ENCODE measurements at regions of chr5 and their contacts with region 1.

Region 1: GRCh38 chr5:40078896-40079575 is 600.7 kb upstream of the PTGER4 start:
- DNase-seq: peak; percentile 40
- H3K4me3 ChIP-seq: no peak overlapping the region
- H3K27ac ChIP-seq: peak overlapping the region; percentile 77
- H3K4me1 ChIP-seq: peaks cover 29% of the 10 kb centered on the region
- H3K27me3 ChIP-seq: no peaks in the 10 kb centered on the region
- CTCF ChIP-seq: no peak

Region 2: DNA sequence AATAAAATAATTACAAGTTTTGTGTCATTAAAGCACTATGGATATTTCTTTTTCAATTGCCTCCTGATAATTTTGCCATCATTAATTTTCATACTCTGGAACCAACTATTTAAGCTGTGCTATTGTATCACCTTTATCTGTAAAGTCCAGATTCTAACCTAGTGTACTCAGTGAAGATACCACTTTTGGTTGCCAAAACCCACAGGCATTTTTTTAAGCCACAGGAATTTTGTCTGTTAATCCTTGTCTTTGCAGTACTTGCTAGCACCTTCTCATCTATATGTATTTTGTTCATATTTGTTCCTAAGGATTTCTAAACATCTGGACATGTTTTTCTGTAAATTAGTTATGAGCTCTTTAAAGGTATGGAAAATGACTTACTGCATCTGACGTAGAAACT is 172.9 kb before region 1 on chr5:
- CTCF ChIA-PET with region 1: no interaction called
- POLR2A ChIA-PET with region 1: no interaction called
- intact Hi-C with region 1: no loop called
- DNase-seq: no peak
- H3K4me3 ChIP-seq: no peak overlapping the region
- H3K27ac ChIP-seq: no peak overlapping the region
- H3K4me1 ChIP-seq: no peaks in the 10 kb centered on the region
- H3K27me3 ChIP-seq: no peaks in the 10 kb centered on the region
- CTCF ChIP-seq: no peak

Region 3: GRCh38 chr5:40046792-40047191 is 32.2 kb before region 1 on chr5:
- CTCF ChIA-PET with region 1: no interaction called
- POLR2A ChIA-PET with region 1: no interaction called
- intact Hi-C with region 1: no loop called
- DNase-seq: no peak
- H3K4me3 ChIP-seq: no peak overlapping the region
- H3K27ac ChIP-seq: no peak overlapping the region
- H3K4me1 ChIP-seq: no peaks in the 10 kb centered on the region
- H3K27me3 ChIP-seq: no peaks in the 10 kb centered on the region
- CTCF ChIP-seq: no peak

Region 4: GRCh38 chr5:40378396-40379177 is 299.6 kb after region 1 on chr5:
- CTCF ChIA-PET with region 1: no interaction called
- POLR2A ChIA-PET with region 1: interaction called, 19 read pairs
- intact Hi-C with region 1: no loop called
- DNase-seq: no peak
- H3K4me3 ChIP-seq: no peak overlapping the region
- H3K27ac ChIP-seq: no peak overlapping the region
- H3K4me1 ChIP-seq: no peaks in the 10 kb centered on the region
- H3K27me3 ChIP-seq: no peaks in the 10 kb centered on the region
- CTCF ChIP-seq: no peak